ENCODE measurements at regions of chr14 and their contacts with region 1.

Region 1: GRCh38 chr14:21557084-21557901 is 22.6 kb downstream of the OR10G3 start:
- DNase-seq: peak; percentile 86
- ATAC-seq: peak; percentile 89
- H3K4me3 Mint-ChIP-seq: peak overlapping the region; percentile 51
- H3K27ac Mint-ChIP-seq: peak overlapping the region; percentile 99
- H3K4me1 Mint-ChIP-seq: peaks cover 47% of the 10 kb centered on the region
- H3K27me3 Mint-ChIP-seq: no peaks in the 10 kb centered on the region
- CTCF ChIP-seq: peak; percentile 74

Region 2: DNA sequence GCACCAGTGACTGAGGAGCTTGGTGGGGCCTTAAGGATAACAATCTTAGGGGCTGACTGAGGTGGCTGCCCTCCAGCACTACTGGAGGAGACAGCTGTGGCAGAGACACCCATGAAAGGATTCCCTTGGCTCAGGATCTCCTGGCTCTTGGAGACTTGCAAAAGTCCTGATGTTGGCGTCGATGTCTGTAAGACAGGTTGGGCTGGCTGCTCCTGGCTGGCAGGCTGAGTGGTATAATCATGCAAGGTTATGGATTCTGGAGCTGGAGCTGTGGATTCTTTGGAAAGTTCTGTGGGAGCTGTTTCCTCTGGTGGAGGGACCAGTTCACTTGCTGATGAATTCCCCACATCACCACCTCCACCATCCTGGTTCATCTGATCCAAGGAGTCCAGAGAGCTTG is 126.2 kb before region 1 on chr14:
- CTCF ChIA-PET with region 1: no interaction called
- POLR2A ChIA-PET with region 1: no interaction called
- DNase-seq: no peak
- ATAC-seq: no peak
- H3K4me3 Mint-ChIP-seq: no peak overlapping the region
- H3K27ac Mint-ChIP-seq: no peak overlapping the region
- H3K4me1 Mint-ChIP-seq: peaks cover 6% of the 10 kb centered on the region
- H3K27me3 Mint-ChIP-seq: no peaks in the 10 kb centered on the region
- CTCF ChIP-seq: no peak

Region 3: GRCh38 chr14:21467616-21468015 is 89.7 kb before region 1 on chr14:
- CTCF ChIA-PET with region 1: no interaction called
- POLR2A ChIA-PET with region 1: no interaction called
- DNase-seq: no peak
- ATAC-seq: no peak
- H3K4me3 Mint-ChIP-seq: no peak overlapping the region
- H3K27ac Mint-ChIP-seq: no peak overlapping the region
- H3K4me1 Mint-ChIP-seq: no peaks in the 10 kb centered on the region
- H3K27me3 Mint-ChIP-seq: no peaks in the 10 kb centered on the region
- CTCF ChIP-seq: no peak

Region 4: DNA sequence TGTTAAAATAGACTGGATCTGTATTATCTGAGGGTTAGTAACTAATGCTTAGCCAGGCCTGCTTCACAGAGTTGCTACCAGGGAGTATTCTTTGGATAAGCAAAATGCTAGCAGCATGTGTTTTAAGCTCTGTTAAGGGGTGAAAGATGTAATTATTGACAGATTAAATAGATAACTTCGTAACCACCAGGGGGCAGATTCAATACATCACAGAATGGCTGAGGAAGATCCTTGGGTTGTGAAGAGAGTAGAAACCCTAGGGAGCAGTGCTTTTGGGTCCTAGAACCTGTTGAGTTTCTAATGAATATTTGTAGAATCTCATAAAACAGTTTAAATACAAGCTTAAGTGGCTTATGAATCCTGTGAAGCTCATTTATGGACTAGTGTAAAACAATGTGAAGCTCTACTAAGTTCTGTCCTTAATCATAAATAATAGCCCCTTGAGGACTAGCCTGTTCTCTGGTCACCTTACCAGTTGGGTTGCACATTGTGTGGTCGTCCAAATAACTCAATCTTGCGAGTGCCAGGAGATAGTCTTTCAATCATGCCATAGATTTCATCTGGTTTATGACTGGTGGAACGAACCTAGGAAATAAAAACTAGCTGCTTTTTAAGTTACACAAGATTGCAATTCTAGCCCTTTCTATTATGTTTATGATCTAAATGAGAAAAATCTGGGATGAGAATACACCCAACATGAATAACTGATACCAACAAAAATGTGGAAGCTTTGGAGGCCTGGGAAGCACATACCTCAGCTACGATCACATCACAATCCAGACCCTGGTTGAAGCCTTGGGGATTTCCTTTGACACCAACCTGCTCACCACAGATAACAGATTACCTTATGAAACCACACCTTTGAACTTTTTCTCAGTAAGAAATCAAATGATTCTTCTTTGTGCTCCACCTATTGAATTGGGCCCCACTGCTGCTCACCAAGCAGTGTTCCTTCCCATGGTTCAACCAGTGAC is 58.5 kb before region 1 on chr14:
- CTCF ChIA-PET with region 1: interaction called, 47 read pairs
- POLR2A ChIA-PET with region 1: interaction called, 5 read pairs
- DNase-seq: no peak
- ATAC-seq: peak; percentile 65
- H3K4me3 Mint-ChIP-seq: no peak overlapping the region
- H3K27ac Mint-ChIP-seq: peak overlapping the region; percentile 59
- H3K4me1 Mint-ChIP-seq: peaks cover 29% of the 10 kb centered on the region
- H3K27me3 Mint-ChIP-seq: no peaks in the 10 kb centered on the region
- CTCF ChIP-seq: no peak

Region 5: DNA sequence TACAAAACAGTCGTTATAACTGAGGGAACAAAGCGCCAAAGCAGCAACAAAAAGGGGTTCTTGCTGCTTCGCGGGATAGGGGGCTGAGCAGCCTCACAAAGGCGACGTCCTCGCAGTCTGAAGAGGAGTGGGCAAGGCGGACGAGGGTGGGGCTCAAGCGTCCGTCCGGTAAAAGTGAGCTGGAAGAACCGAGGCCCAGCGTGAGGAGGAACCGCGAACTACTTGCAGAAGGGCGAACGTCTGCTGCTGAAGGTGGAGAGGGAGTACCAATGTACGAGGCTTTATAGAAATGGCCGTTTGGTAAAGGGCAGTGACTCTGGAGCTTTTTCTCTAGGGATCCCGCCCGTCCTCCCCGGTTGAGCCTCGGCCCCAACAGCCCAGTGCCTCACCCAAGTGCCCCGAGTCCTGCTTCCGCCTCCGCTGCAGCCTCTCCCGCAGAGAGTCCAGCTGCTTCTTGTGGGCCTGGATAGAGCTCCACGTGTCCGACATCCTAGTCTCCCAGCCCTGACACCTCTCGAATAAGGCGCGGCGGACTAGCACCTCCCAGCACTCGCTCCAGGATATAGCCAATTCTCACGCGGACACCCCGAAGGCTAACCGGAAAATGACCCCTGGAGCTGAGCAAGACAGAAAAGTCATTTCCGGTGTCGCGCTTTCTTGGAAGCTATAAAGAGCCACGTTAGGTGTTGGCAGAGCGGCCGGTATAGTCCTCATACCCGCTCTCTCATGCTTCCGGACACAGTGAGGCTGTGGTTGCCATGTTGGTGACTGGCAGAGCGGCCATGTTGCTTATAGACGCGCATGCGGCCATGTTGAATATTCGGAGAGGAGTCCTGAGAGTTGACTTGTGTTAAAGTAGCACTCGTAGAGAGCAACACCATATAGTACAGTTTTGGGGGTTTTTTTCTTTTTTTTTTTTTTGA is 46.3 kb before region 1 on chr14 and contains the start of gene METTL3:
- CTCF ChIA-PET with region 1: interaction called, 10 read pairs
- POLR2A ChIA-PET with region 1: interaction called, 10 read pairs
- DNase-seq: peak; percentile 93
- ATAC-seq: peak; percentile 98
- H3K4me3 Mint-ChIP-seq: peak within 1 kb of the TSS; percentile 96
- H3K27ac Mint-ChIP-seq: peak within 1 kb of the TSS; percentile 94
- H3K4me1 Mint-ChIP-seq: peaks cover 42% of the 10 kb centered on the region
- H3K27me3 Mint-ChIP-seq: no peaks in the 10 kb centered on the region
- CTCF ChIP-seq: no peak
- total RNA-seq, gene METTL3: 87.2 to 93.2 TPM (median 89.5 TPM) in 3 replicates

Region 6: DNA sequence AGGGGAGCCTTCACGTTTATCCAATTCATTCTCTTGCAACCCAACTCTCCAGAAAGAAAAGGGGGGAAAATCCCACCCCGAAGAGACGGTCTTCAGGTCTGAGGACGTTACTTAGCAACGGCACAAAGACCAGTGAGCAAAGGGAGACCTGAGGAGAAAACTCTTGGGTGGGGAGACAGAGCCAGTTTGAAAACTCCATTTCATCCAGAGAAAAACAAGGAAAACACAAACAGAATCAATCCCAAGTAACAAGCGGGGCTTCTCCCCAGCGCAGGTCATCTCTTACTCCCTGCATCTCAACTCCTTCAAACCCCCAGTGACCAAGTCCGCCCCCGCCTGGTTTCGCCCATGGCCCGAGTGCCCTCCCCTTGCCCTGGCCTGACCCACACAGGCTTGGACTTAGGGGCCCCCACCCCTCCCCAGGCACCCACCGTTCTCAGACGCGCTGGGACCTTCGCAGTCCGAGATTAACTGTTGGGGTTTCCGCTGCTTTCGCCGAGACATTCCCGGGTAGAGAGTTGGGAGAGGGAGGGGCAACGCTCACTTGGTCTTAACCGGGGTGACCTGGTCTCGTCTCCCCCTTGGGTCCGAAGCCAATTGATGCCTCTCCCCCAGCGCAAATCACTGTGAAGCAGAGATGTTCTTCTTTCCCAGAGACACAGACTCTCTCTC is 20.7 kb before region 1 on chr14:
- CTCF ChIA-PET with region 1: interaction called, 6 read pairs
- POLR2A ChIA-PET with region 1: interaction called, 11 read pairs
- DNase-seq: peak; percentile 66
- ATAC-seq: peak; percentile 35
- H3K4me3 Mint-ChIP-seq: peak overlapping the region; percentile 90
- H3K27ac Mint-ChIP-seq: peak overlapping the region; percentile 100
- H3K4me1 Mint-ChIP-seq: peaks cover 51% of the 10 kb centered on the region
- H3K27me3 Mint-ChIP-seq: no peaks in the 10 kb centered on the region
- CTCF ChIP-seq: no peak

Region 7: GRCh38 chr14:21543521-21543960 is 13.8 kb before region 1 on chr14:
- CTCF ChIA-PET with region 1: interaction called, 5 read pairs
- POLR2A ChIA-PET with region 1: interaction called, 11 read pairs
- DNase-seq: no peak
- ATAC-seq: peak; percentile 86
- H3K4me3 Mint-ChIP-seq: peak overlapping the region; percentile 63
- H3K27ac Mint-ChIP-seq: peak overlapping the region; percentile 87
- H3K4me1 Mint-ChIP-seq: peaks cover 49% of the 10 kb centered on the region
- H3K27me3 Mint-ChIP-seq: no peaks in the 10 kb centered on the region
- CTCF ChIP-seq: no peak

Region 8: DNA sequence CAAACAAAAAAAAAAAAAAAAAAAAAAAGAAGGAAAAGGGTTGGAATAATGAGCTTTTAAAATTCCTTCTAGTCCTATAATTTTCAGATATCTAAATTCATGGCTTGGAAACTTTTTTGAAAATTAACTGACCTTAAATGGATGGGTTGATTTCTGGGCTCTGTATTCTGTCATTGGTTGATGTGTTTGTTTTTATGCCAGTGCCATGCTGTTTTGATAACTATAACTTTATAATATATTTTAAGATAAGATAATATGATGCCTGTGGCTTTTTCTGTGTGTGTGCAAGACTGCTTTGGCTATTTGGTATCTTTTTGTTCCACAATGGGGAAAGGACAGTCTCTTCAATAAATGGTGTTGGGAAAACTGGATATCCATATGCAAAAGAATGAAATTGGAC is 15.3 kb after region 1 on chr14:
- CTCF ChIA-PET with region 1: no interaction called
- POLR2A ChIA-PET with region 1: no interaction called
- DNase-seq: no peak
- ATAC-seq: no peak
- H3K4me3 Mint-ChIP-seq: no peak overlapping the region
- H3K27ac Mint-ChIP-seq: no peak overlapping the region
- H3K4me1 Mint-ChIP-seq: no peaks in the 10 kb centered on the region
- H3K27me3 Mint-ChIP-seq: no peaks in the 10 kb centered on the region
- CTCF ChIP-seq: no peak

Region 9: GRCh38 chr14:21589317-21589716 is 32.0 kb after region 1 on chr14:
- CTCF ChIA-PET with region 1: no interaction called
- POLR2A ChIA-PET with region 1: no interaction called
- DNase-seq: no peak
- ATAC-seq: no peak
- H3K4me3 Mint-ChIP-seq: no peak overlapping the region
- H3K27ac Mint-ChIP-seq: no peak overlapping the region
- H3K4me1 Mint-ChIP-seq: no peaks in the 10 kb centered on the region
- H3K27me3 Mint-ChIP-seq: peaks cover 9% of the 10 kb centered on the region
- CTCF ChIP-seq: no peak

Measured in WTC11 (cell line).